ENCODE measurements at regions of chr17 and their contacts with region 1.

Region 1: GRCh38 chr17:75271233-75271954 is 363 bp upstream of the MIF4GD start:
- H3K4me3 ChIP-seq: peak overlapping the region; percentile 78
- H3K27ac ChIP-seq: peak overlapping the region; percentile 94; the same call in 1 of the 2 replicates
- H3K4me1 ChIP-seq: peaks cover 9% of the 10 kb centered on the region; the same call in 1 of the 2 replicates
- CTCF ChIP-seq: peak; percentile 69

Region 2: DNA sequence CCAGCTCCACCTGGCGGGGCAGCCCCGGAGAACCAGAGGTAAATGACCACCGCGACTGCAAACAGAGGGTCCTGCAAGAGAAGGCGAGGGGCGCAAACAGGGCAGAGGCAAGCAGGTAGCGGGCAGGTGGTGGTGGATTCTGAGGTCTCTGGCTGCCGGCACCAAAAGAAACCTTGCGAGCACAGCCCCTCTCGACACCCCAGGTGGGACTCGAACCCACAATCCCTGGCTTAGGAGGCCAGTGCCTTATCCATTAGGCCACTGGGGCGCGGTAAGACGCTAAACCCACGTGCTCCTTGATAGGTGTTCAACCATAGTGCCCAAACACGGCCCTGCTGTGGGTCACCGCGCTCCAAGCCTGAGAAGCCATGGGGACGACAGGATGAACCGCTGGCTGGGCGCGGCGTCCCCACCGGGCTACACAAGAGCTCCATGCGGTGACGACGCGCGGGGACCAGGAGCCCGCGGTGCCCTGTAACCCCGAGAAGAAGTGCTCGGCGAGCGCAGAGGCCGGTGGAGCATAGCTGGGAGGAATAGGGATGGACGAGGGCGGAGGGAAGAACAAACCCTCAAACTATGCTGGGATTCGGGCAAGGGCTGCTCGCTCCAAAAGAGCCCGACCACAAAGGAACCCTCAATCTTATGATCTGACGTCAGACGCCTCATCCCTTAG is 237.0 kb before region 1 on chr17:
- CTCF ChIA-PET with region 1: no interaction called
- POLR2A ChIA-PET with region 1: interaction called, 10 read pairs
- H3K4me3 ChIP-seq: peak overlapping the region; percentile 60
- H3K27ac ChIP-seq: peak overlapping the region; percentile 94
- H3K4me1 ChIP-seq: peaks cover 19% of the 10 kb centered on the region
- CTCF ChIP-seq: peak; percentile 51

Region 3: DNA sequence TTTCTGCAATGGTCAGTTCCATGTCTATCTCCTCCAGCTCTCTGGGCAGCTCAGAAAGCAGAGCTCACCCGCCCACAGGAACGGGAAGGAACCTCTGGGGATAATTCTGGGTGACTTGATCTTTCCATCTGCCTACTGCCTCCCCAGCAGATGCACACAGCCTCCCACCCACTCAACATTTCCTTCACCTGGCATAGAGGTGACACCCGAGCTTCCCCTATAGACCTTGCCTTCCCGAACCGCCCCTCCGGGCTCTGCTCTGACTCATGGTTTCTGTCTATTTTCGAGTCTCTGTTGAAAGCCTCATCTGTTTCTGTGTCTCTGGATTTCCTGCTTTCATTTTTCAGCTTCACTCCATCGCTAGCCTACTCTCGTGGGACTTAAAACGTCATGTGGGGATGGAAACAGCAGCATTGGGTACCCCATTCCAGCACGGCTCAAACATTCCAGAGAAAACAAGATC is 21.4 kb before region 1 on chr17:
- CTCF ChIA-PET with region 1: interaction called, 13 read pairs
- POLR2A ChIA-PET with region 1: interaction called, 9 read pairs
- H3K4me3 ChIP-seq: no peak overlapping the region
- H3K27ac ChIP-seq: peak overlapping the region; percentile 3; the same call in 1 of the 2 replicates
- H3K4me1 ChIP-seq: peaks cover 6% of the 10 kb centered on the region
- CTCF ChIP-seq: no peak

Region 4: GRCh38 chr17:75338335-75338734 is 66.9 kb after region 1 on chr17:
- CTCF ChIA-PET with region 1: no interaction called
- POLR2A ChIA-PET with region 1: no interaction called
- H3K4me3 ChIP-seq: no peak overlapping the region
- H3K27ac ChIP-seq: peak overlapping the region; percentile 27; the same call in 1 of the 2 replicates
- H3K4me1 ChIP-seq: peaks cover 11% of the 10 kb centered on the region
- CTCF ChIP-seq: no peak

Region 5: GRCh38 chr17:75393523-75394331 is 122.3 kb after region 1 on chr17:
- CTCF ChIA-PET with region 1: interaction called, 11 read pairs
- POLR2A ChIA-PET with region 1: interaction called, 26 read pairs
- H3K4me3 ChIP-seq: peak overlapping the region; percentile 61
- H3K27ac ChIP-seq: peak overlapping the region; percentile 84
- H3K4me1 ChIP-seq: peaks cover 43% of the 10 kb centered on the region
- CTCF ChIP-seq: no peak; the same call in 1 of the 2 replicates

Region 6: DNA sequence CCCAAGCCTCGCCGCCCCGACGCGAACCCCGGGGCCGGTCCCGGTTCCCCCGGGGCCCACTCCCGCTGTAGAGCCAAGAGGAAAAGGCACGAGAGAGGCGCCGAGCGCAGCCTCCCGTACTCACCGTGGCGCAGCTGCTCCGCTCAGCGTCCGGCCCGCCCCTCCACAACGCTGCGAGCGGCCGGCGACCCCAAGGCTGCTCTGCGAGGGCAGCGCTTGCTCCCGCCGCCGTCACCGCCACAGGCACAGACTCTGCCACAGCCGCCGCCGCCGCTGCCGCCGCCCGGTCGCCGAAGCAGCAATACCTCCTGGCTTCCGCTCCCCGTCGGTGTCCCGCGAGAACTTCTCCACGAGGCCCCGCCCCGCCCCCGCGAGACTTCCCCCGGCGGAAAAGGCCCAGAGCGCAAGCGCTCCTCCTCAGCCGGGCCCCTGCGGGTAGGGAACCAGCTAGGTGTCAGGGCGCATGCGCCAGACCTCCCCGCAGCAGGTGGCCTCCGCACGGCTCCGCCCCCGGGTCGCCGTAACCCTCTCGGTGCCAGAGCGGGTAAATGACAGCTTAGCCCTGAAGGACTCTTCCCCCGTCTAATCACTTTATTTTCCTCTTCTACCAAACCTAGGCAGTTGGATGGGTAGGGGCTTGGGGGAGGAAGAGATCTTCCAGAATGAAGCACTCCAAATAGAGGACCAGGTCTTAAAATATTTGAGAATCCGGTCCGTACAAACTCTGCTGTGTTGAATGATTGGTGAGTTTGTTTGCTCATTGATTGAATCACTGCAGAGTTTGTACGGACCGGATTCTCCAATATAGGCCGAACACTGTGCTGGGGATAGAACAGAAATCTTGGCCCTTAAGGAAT is 134.2 kb after region 1 on chr17 and contains the start of gene GRB2:
- CTCF ChIA-PET with region 1: interaction called, 9 read pairs
- POLR2A ChIA-PET with region 1: interaction called, 30 read pairs
- H3K4me3 ChIP-seq: peak within 1 kb of the TSS; percentile 96
- H3K27ac ChIP-seq: peak within 1 kb of the TSS; percentile 94
- H3K4me1 ChIP-seq: 0 out of 2 replicates have a peak, but pooled peaks cover 8% of the 10 kb centered on the region
- CTCF ChIP-seq: no peak

Measured in HEK293 (cell line).